T-cell (primary cell): ENCODE measurements at regions of chr4 and their contacts with region 1.

Region 1: DNA sequence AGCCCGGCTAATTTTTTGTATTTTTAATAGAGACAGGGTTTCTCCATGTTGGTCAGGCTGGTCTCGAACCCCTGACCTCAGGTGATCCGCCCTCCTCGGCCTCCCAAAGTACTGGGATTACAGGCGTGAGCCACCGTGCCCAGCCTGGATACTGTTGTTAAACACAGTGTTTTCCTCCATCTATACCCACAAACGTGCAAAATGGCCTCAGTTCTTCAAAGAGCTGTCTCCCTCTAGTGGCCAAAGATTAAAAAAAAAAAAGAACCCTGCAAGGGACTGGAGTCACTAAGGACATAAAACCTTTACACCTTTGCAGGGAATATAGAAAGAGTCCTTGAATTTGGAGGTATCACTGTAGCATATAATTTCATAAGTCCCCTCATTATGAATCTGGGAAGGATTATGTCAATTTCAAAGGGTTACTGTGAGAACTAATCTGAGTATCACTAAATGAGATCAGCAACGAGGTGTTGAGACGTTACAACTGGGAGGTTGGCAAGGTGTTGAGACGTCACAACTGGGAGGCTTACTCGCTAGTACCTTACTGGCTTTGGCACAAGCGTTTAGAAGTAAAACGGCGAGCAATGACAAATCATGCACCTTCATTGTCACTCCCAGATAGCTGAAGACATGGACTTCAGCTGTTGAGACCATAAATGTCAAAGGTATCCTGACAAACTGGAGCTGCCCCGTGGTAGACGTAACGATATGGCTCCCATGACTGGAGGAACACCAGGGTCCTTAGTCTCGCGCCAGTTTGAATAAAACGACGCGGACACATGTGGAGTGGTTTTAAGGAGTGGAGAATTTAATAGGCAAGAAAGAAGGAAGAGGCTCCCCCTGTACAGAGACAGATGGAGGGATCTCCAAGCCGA is 33.4 kb upstream of the ENPP6 start:
- DNase-seq: peak in 2 of 35 experiments; percentile 16 to 75
- ATAC-seq: peak in 3 of 4 experiments; percentile 47 to 75 (median 75)
- H3K4me3 ChIP-seq: no peak overlapping the region
- H3K4me3 Mint-ChIP-seq: no peak overlapping the region
- H3K27ac ChIP-seq: no peak overlapping the region
- H3K27ac Mint-ChIP-seq: no peak overlapping the region
- H3K4me1 ChIP-seq: peaks cover 0 to 3% of the 10 kb centered on the region in 2 experiments
- H3K4me1 Mint-ChIP-seq: peaks cover 0 to 6% (median 3%) of the 10 kb centered on the region in 3 donors
- H3K27me3 ChIP-seq: peaks cover 0 to 4% of the 10 kb centered on the region in 2 experiments
- H3K27me3 Mint-ChIP-seq: peaks cover 0 to 6% of the 10 kb centered on the region in 2 donors

Region 2: DNA sequence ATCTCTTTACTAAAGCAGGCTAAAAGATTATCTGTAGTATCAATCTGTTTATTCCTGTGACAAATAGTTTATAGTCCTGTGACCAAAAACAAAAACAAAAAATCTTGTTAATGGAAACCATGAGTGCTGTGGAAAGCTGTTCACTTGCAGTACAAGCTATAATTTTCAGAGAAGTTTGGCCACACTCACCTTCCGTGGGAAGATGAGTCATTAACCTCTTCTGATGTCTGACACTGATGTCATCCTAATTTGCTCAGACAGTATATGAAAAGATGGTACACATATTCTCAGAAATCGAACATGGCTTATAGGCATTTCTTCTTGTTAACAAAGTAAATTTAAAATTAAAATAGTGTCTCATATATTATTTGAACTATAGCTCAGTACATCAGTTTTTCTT is 13.4 kb before region 1 on chr4:
- CTCF ChIA-PET with region 1: interaction called, 7 to 11 read pairs
- POLR2A ChIA-PET with region 1: no interaction called
- DNase-seq: peak in 1 of 35 experiments; percentile 43
- ATAC-seq: peak; percentile 66 to 97 (median 78)
- H3K4me3 ChIP-seq: no peak overlapping the region
- H3K4me3 Mint-ChIP-seq: no peak overlapping the region
- H3K27ac ChIP-seq: no peak overlapping the region
- H3K27ac Mint-ChIP-seq: peak overlapping the region; percentile 70 to 81
- H3K4me1 ChIP-seq: no peaks in the 10 kb centered on the region
- H3K4me1 Mint-ChIP-seq: peaks cover 8 to 23% (median 21%) of the 10 kb centered on the region in 3 donors
- H3K27me3 ChIP-seq: no peaks in the 10 kb centered on the region
- H3K27me3 Mint-ChIP-seq: no peaks in the 10 kb centered on the region

Region 3: GRCh38 chr4:184282251-184282713 is 31.2 kb after region 1 on chr4:
- CTCF ChIA-PET with region 1: no interaction called
- POLR2A ChIA-PET with region 1: no interaction called
- DNase-seq: peak in 28 of 35 experiments; percentile 6 to 58 (median 25)
- ATAC-seq: peak; percentile 70 to 82 (median 81)
- H3K4me3 ChIP-seq: no peak overlapping the region
- H3K4me3 Mint-ChIP-seq: peak overlapping the region in 2 of 3 donors; percentile 15 to 24
- H3K27ac ChIP-seq: peak overlapping the region; percentile 50
- H3K27ac Mint-ChIP-seq: peak overlapping the region; percentile 76 to 91
- H3K4me1 ChIP-seq: peaks cover 16 to 36% of the 10 kb centered on the region in 2 experiments
- H3K4me1 Mint-ChIP-seq: peaks cover 33 to 47% (median 38%) of the 10 kb centered on the region in 3 donors
- H3K27me3 ChIP-seq: no peaks in the 10 kb centered on the region
- H3K27me3 Mint-ChIP-seq: no peaks in the 10 kb centered on the region